CD8-positive, alpha-beta T cell (primary cell): ENCODE measurements at regions of chr2 and their contacts with region 1.

Region 1: GRCh38 chr2:43123981-43124686 is 102.3 kb downstream of the ZFP36L2 start:
- DNase-seq: peak in 2 of 9 experiments; percentile 38 to 40
- ATAC-seq: peak; percentile 24
- H3K4me3 ChIP-seq: no peak overlapping the region
- H3K4me3 Mint-ChIP-seq: peak overlapping the region; percentile 68
- H3K27ac ChIP-seq: no peak overlapping the region
- H3K27ac Mint-ChIP-seq: peak overlapping the region; percentile 82
- H3K4me1 ChIP-seq: peaks cover 60% of the 10 kb centered on the region
- H3K4me1 Mint-ChIP-seq: peaks cover 65% of the 10 kb centered on the region
- H3K27me3 ChIP-seq: no peaks in the 10 kb centered on the region
- H3K27me3 Mint-ChIP-seq: no peaks in the 10 kb centered on the region
- CTCF ChIP-seq: no peak

Region 2: GRCh38 chr2:42974721-42975717 is 149.1 kb before region 1 on chr2:
- CTCF ChIA-PET with region 1: interaction called, 12 read pairs
- POLR2A ChIA-PET with region 1: no interaction called
- intact Hi-C with region 1: loop called (anchors 5 kb)
- DNase-seq: peak; percentile 27 to 79 (median 60)
- ATAC-seq: peak; percentile 78
- H3K4me3 ChIP-seq: no peak overlapping the region
- H3K4me3 Mint-ChIP-seq: no peak overlapping the region
- H3K27ac ChIP-seq: no peak overlapping the region
- H3K27ac Mint-ChIP-seq: no peak overlapping the region
- H3K4me1 ChIP-seq: peaks cover 8% of the 10 kb centered on the region
- H3K4me1 Mint-ChIP-seq: peaks cover 15% of the 10 kb centered on the region
- H3K27me3 ChIP-seq: no peaks in the 10 kb centered on the region
- H3K27me3 Mint-ChIP-seq: no peaks in the 10 kb centered on the region
- CTCF ChIP-seq: peak; percentile 71

Region 3: GRCh38 chr2:43417300-43417699 is 293.2 kb after region 1 on chr2:
- CTCF ChIA-PET with region 1: no interaction called
- POLR2A ChIA-PET with region 1: no interaction called
- intact Hi-C with region 1: no loop called
- DNase-seq: no peak
- ATAC-seq: no peak
- H3K4me3 ChIP-seq: no peak overlapping the region
- H3K4me3 Mint-ChIP-seq: no peak overlapping the region
- H3K27ac ChIP-seq: no peak overlapping the region
- H3K27ac Mint-ChIP-seq: no peak overlapping the region
- H3K4me1 ChIP-seq: no peaks in the 10 kb centered on the region
- H3K4me1 Mint-ChIP-seq: peaks cover 10% of the 10 kb centered on the region
- H3K27me3 ChIP-seq: no peaks in the 10 kb centered on the region
- H3K27me3 Mint-ChIP-seq: no peaks in the 10 kb centered on the region
- CTCF ChIP-seq: no peak